PC-9 (cell line): ENCODE measurements at regions of chr3 and their contacts with region 1.

Region 1: GRCh38 chr3:72818092-72818773 is 30.0 kb downstream of the SHQ1 start:
- DNase-seq: peak in 1 of 2 experiments; percentile 11
- H3K4me3 ChIP-seq: no peak overlapping the region
- H3K27ac ChIP-seq: no peak overlapping the region
- H3K4me1 ChIP-seq: peaks cover 17% of the 10 kb centered on the region
- H3K27me3 ChIP-seq: no peaks in the 10 kb centered on the region
- CTCF ChIP-seq: peak; percentile 70

Region 2: GRCh38 chr3:71710906-71711494 is 1107.2 kb before region 1 on chr3:
- CTCF ChIA-PET with region 1: no interaction called
- POLR2A ChIA-PET with region 1: no interaction called
- intact Hi-C with region 1: loop called (anchors 5 kb)
- DNase-seq: no peak
- H3K4me3 ChIP-seq: no peak overlapping the region
- H3K27ac ChIP-seq: no peak overlapping the region
- H3K4me1 ChIP-seq: no peaks in the 10 kb centered on the region
- H3K27me3 ChIP-seq: peaks cover 28% of the 10 kb centered on the region
- CTCF ChIP-seq: peak; percentile 61

Region 3: DNA sequence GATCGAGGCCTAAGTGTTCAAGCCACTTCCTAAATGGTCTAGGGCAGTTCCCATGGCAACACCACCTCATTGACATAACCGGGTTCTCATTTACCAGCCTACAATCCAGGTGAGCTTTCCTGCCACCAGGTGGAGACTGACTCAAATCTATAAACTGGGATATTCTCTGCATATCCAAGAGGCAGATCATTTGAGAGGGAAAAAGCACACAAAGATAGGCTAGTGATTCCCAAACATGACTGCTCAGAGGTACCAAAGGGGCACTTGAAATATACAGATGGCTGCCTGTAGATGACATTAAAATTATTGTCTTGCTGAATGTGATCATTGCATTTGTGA is 892.0 kb before region 1 on chr3:
- CTCF ChIA-PET with region 1: no interaction called
- POLR2A ChIA-PET with region 1: no interaction called
- intact Hi-C with region 1: loop called (anchors 1 kb)
- DNase-seq: peak in 1 of 2 experiments; percentile 31
- H3K4me3 ChIP-seq: no peak overlapping the region
- H3K27ac ChIP-seq: no peak overlapping the region
- H3K4me1 ChIP-seq: no peaks in the 10 kb centered on the region
- H3K27me3 ChIP-seq: peaks cover 7% of the 10 kb centered on the region
- CTCF ChIP-seq: peak; percentile 66

Region 4: DNA sequence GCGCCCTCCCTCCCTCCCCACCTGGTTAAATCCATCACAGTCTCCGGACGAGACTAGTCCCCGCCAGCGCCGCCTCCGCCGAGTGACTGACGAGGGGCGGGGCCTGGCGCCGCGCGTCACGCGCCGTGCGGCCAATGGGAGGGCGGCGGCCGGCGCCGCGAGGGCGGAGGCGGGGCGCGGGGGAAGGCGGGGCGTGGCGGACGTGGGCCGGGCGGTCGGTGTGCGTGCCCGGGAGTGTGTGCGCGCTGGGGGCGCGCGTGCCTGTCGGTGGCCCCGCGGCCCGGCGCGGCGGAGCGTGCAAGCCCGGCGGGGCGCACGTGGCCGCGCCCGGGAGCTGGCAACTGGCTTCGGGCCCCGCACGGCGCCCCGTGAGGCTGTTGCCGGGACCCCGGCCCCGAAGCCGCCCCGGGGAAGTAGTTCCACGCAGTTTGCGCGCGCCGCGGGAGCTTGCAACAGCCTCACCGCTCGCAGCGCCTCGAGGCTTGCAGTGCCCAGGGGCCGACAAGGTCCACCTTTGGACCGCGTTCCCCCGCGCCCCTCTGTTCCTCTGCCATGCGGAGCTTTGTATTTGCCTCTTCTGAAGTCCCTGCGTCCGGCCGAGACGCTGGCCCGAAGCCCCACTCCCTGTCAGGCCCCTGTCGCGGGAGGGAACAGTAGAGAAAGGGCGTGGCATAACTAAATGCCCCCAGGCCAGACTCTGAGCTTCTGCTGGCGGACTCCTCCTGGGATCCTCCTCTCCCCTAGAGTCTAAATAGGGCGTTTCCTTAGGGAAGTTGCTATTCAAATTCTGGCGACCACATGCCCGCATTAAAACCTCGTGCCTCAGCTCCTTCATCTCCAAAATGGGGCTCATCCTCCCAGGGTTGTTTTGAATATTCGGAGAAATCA is 370.9 kb before region 1 on chr3:
- CTCF ChIA-PET with region 1: no interaction called
- POLR2A ChIA-PET with region 1: no interaction called
- intact Hi-C with region 1: loop called (anchors 2 kb)
- DNase-seq: peak; percentile 50 to 93
- H3K4me3 ChIP-seq: peak overlapping the region; percentile 66
- H3K27ac ChIP-seq: peak overlapping the region; percentile 61; the same call in 1 of the 2 replicates
- H3K4me1 ChIP-seq: peaks cover 23% of the 10 kb centered on the region
- H3K27me3 ChIP-seq: no peaks in the 10 kb centered on the region
- CTCF ChIP-seq: no peak

Region 5: DNA sequence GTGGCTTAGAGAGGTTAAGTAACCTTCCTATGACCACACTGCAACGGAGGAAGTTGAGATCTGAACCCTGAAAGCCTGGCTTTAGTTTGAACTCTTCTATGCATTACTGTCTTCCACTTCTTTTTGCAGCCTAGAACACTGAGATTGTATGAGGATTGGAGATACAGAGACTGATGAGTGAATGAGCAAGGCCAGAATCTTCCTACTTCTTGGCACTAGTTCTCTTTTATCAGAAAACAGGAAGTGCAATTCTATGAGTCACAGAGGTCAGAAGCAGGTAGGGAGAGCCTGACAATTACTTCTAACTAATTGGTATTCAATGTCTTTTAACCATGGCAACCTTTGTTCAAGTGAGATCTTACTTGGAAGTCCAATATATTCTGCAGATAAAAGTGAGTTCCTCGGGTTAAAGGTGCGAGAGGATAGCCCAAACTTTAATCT is 189.0 kb before region 1 on chr3:
- CTCF ChIA-PET with region 1: interaction called, 5 read pairs
- POLR2A ChIA-PET with region 1: no interaction called
- intact Hi-C with region 1: loop called (anchors 1 kb)
- DNase-seq: peak in 1 of 2 experiments; percentile 76
- H3K4me3 ChIP-seq: no peak overlapping the region
- H3K27ac ChIP-seq: peak overlapping the region; percentile 93
- H3K4me1 ChIP-seq: peaks cover 61% of the 10 kb centered on the region
- H3K27me3 ChIP-seq: no peaks in the 10 kb centered on the region
- CTCF ChIP-seq: no peak

Region 6: DNA sequence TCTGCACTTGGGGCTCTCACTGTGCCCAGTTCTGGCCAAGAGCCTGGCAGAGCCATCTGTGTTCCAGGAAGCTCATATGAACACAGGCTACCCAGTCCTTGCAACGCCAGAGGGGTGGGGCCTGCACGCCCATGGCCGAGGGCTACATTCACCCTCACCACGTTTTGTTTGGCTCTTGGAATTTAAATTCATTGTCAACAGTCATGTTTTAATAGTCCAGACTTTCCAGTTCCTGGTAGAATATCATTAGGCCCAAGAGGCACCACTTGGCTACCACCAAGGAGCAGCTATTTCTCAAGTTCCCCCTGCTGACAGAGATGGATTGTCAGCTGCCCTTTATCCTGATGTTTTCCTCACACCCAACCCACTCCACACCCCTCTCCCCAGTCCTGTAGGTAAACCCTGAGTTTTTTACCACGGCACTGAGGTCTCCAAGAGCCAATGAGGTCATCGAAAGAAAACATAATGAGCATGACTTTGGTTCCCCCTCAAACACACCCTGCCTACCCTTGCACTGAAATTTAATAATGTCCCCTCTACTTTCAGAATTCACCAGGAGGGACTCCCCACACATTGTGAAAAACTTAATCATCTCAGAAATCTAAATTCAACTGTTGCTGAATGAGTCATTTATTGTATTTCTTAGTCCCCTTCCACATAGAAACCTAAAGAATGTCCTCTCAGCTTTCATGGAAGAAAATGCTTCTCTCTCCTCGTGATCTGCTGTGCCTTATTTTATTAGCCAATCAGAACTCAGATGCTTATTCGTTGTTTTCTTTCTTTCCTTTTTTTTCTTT is 95.1 kb before region 1 on chr3:
- CTCF ChIA-PET with region 1: interaction called, 3 read pairs
- POLR2A ChIA-PET with region 1: no interaction called
- intact Hi-C with region 1: loop called (anchors 1 kb)
- DNase-seq: peak; percentile 89 to 93
- H3K4me3 ChIP-seq: no peak overlapping the region; the same call in 1 of the 2 replicates
- H3K27ac ChIP-seq: peak overlapping the region; percentile 97
- H3K4me1 ChIP-seq: peaks cover 41% of the 10 kb centered on the region
- H3K27me3 ChIP-seq: no peaks in the 10 kb centered on the region
- CTCF ChIP-seq: no peak

Region 7: GRCh38 chr3:72782521-72782920 is 35.7 kb before region 1 on chr3:
- CTCF ChIA-PET with region 1: no interaction called
- POLR2A ChIA-PET with region 1: no interaction called
- intact Hi-C with region 1: no loop called
- DNase-seq: no peak
- H3K4me3 ChIP-seq: no peak overlapping the region
- H3K27ac ChIP-seq: no peak overlapping the region
- H3K4me1 ChIP-seq: no peaks in the 10 kb centered on the region
- H3K27me3 ChIP-seq: no peaks in the 10 kb centered on the region
- CTCF ChIP-seq: no peak

Region 8: GRCh38 chr3:72891053-72891855 is 73.0 kb after region 1 on chr3:
- CTCF ChIA-PET with region 1: no interaction called
- POLR2A ChIA-PET with region 1: no interaction called
- intact Hi-C with region 1: no loop called
- DNase-seq: peak; percentile 41 to 53
- H3K4me3 ChIP-seq: no peak overlapping the region
- H3K27ac ChIP-seq: no peak overlapping the region
- H3K4me1 ChIP-seq: peaks cover 39% of the 10 kb centered on the region
- H3K27me3 ChIP-seq: no peaks in the 10 kb centered on the region
- CTCF ChIP-seq: no peak

Region 9: DNA sequence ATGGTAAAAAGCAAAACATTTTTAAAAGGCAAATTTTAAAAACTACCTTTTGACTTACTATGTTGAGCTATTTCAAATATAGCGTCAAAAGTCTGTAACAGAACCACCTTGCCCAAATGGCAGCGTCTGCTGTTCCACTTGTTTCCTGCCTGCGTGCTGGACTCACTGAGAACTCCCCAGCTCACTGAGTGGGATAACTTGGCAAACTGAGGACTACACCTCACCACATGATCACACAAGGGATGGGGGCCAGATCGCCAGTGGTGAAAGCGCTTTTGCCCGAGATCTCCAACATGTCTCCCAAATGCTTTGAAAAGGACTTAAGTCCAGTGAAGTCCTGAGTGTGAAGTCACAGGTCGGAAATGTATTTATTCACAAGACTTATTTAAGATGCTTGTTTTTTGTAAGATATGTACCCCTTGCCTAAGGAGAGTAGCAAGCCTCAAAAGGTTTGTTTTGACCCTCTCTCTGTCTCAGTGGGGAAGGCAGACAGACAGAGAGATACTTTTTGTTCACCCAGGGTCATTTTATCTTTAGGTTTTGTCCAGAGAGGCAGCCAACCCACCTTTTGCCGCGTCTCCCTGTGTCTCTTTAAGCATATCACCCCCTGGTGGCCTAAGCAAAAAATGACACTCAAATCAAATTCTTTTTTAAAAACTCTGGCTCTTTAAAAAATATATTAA is 613.9 kb after region 1 on chr3:
- CTCF ChIA-PET with region 1: no interaction called
- POLR2A ChIA-PET with region 1: no interaction called
- intact Hi-C with region 1: no loop called
- DNase-seq: no peak
- H3K4me3 ChIP-seq: no peak overlapping the region
- H3K27ac ChIP-seq: no peak overlapping the region
- H3K4me1 ChIP-seq: no peaks in the 10 kb centered on the region
- H3K27me3 ChIP-seq: no peaks in the 10 kb centered on the region
- CTCF ChIP-seq: peak; percentile 74